ENCODE measurements at regions of chr1 and their contacts with region 1.

Region 1: DNA sequence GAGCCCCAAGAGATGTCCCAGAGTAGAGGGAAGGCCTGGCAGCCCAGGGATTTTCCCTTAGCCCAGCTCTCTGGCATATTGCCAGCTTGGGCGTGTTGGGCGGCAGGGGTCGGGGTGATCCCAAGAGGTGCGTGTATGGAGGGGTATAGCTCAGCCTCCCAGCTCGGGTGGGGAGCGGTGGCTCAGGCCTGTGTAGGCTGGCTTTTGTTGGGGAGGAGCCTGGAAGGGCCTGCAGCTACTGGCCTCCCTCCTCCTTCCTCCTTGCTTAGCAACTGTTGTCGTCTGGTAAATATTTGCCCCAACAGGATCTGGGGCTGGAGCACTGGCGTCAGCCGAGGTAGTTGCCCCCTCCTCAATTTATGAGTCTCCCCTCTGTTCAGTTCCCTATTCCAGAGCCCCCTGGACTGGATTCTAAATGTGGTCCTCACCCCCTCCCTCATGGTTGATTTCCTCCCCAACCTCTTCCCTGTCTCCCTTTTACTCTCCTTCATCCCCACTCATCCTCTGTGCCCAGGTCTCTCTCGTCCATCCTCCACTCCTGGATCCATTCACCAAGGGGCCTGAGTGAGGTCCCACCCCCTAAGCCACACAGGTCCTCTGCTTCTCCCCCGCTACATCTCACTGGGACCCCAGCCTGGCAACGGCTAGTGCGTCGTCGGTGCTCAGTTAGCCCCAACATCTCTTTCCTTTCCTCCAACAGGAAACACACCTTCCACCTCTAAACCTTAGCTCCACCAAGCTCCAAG is 10.3 kb upstream of the LMNA start:
- DNase-seq: peak; percentile 78 to 90 (median 83)
- H3K4me3 ChIP-seq: no peak overlapping the region
- H3K4me3 Mint-ChIP-seq: peak overlapping the region; percentile 60 to 88 (median 74)
- H3K27ac ChIP-seq: peak overlapping the region; percentile 94
- H3K27ac Mint-ChIP-seq: peak overlapping the region; percentile 90 to 100 (median 100)
- H3K4me1 ChIP-seq: peaks cover 55% of the 10 kb centered on the region
- H3K4me1 Mint-ChIP-seq: peaks cover 42 to 86% (median 60%) of the 10 kb centered on the region in 4 donors
- H3K27me3 ChIP-seq: no peaks in the 10 kb centered on the region
- H3K27me3 Mint-ChIP-seq: no peaks in the 10 kb centered on the region

Region 2: DNA sequence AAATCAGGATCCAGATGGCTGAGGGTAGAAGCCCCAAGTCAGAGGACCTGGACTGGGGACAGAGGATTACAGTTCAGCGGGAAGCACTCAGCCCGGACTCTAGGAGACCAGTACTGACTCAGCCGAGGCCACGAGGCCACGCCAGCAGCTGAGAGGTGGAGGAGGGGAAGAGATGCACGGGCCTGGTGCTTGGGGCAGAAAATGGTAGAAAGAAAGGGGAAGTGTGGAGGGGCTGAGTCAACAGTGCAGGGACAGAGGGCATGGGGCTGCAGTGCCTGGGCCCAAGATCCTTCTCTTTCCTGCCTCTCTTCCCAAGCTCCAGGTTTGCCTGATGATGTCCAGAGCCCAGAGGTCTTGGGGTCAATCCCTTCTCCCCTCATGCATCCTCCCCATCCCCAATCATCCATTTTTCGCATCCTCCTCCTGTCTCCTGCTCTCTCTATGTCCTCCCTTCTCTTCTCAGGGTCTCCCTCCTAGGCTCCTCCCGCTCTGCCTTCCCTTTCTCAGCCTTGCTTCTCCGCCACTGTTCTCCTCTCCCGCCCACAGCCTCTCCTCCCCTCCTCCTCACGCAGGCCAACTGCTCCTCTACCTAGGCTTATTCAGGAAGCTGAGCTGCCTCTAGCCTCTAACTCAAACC is 133.6 kb before region 1 on chr1:
- CTCF ChIA-PET with region 1: no interaction called
- POLR2A ChIA-PET with region 1: no interaction called
- intact Hi-C with region 1: no loop called
- DNase-seq: no peak
- H3K4me3 ChIP-seq: no peak overlapping the region
- H3K4me3 Mint-ChIP-seq: peak overlapping the region; percentile 66 to 88 (median 74)
- H3K27ac ChIP-seq: peak overlapping the region; percentile 44
- H3K27ac Mint-ChIP-seq: peak overlapping the region; percentile 81 to 96 (median 93)
- H3K4me1 ChIP-seq: peaks cover 96% of the 10 kb centered on the region
- H3K4me1 Mint-ChIP-seq: peaks cover 73 to 98% (median 88%) of the 10 kb centered on the region in 4 donors
- H3K27me3 ChIP-seq: no peaks in the 10 kb centered on the region
- H3K27me3 Mint-ChIP-seq: no peaks in the 10 kb centered on the region

Region 3: GRCh38 chr1:156090822-156091188 is 13.4 kb before region 1 on chr1:
- CTCF ChIA-PET with region 1: interaction called, 29 read pairs
- POLR2A ChIA-PET with region 1: interaction called, 25 read pairs
- intact Hi-C with region 1: loop called (anchors 1 kb)
- DNase-seq: peak; percentile 78 to 84 (median 81)
- H3K4me3 ChIP-seq: no peak overlapping the region
- H3K4me3 Mint-ChIP-seq: peak overlapping the region in 1 of 8 donors; percentile 16
- H3K27ac ChIP-seq: no peak overlapping the region
- H3K27ac Mint-ChIP-seq: peak overlapping the region in 5 of 7 donors; percentile 11 to 79 (median 61)
- H3K4me1 ChIP-seq: peaks cover 6% of the 10 kb centered on the region
- H3K4me1 Mint-ChIP-seq: peaks cover 6 to 18% (median 12%) of the 10 kb centered on the region in 4 donors
- H3K27me3 ChIP-seq: no peaks in the 10 kb centered on the region
- H3K27me3 Mint-ChIP-seq: peaks cover 6 to 7% of the 10 kb centered on the region in 2 donors

Region 4: GRCh38 chr1:156114101-156114916 is 10.1 kb after region 1 on chr1 and contains the start of gene LMNA:
- CTCF ChIA-PET with region 1: interaction called, 157 read pairs
- POLR2A ChIA-PET with region 1: interaction called, 527 read pairs
- intact Hi-C with region 1: loop called (anchors 1 kb)
- DNase-seq: peak; percentile 73 to 96 (median 74)
- H3K4me3 ChIP-seq: peak within 1 kb of the TSS; percentile 81
- H3K4me3 Mint-ChIP-seq: peak within 1 kb of the TSS; percentile 94 to 98 (median 96)
- H3K27ac ChIP-seq: peak within 1 kb of the TSS; percentile 91
- H3K27ac Mint-ChIP-seq: peak within 1 kb of the TSS; percentile 95 to 99 (median 98)
- H3K4me1 ChIP-seq: peaks cover 41% of the 10 kb centered on the region
- H3K4me1 Mint-ChIP-seq: peaks cover 12 to 49% (median 27%) of the 10 kb centered on the region in 4 donors
- H3K27me3 ChIP-seq: no peaks in the 10 kb centered on the region
- H3K27me3 Mint-ChIP-seq: no peaks in the 10 kb centered on the region
- total RNA-seq, gene LMNA: 29.7 to 33.8 TPM

Region 5: GRCh38 chr1:156123356-156124196 is 19.3 kb after region 1 on chr1:
- CTCF ChIA-PET with region 1: interaction called, 716 read pairs
- POLR2A ChIA-PET with region 1: interaction called, 527 read pairs
- intact Hi-C with region 1: loop called (anchors 2 kb)
- DNase-seq: peak; percentile 70 to 85 (median 71)
- H3K4me3 ChIP-seq: peak overlapping the region in 1 of 2 donors; percentile 7
- H3K4me3 Mint-ChIP-seq: peak overlapping the region in 7 of 8 donors; percentile 9 to 66 (median 55)
- H3K27ac ChIP-seq: peak overlapping the region; percentile 51
- H3K27ac Mint-ChIP-seq: peak overlapping the region; percentile 90 to 98 (median 96)
- H3K4me1 ChIP-seq: peaks cover 76% of the 10 kb centered on the region
- H3K4me1 Mint-ChIP-seq: peaks cover 44 to 90% (median 67%) of the 10 kb centered on the region in 4 donors
- H3K27me3 ChIP-seq: no peaks in the 10 kb centered on the region
- H3K27me3 Mint-ChIP-seq: no peaks in the 10 kb centered on the region